ENCODE measurements at regions of chr3 and their contacts with region 1.

Region 1: DNA sequence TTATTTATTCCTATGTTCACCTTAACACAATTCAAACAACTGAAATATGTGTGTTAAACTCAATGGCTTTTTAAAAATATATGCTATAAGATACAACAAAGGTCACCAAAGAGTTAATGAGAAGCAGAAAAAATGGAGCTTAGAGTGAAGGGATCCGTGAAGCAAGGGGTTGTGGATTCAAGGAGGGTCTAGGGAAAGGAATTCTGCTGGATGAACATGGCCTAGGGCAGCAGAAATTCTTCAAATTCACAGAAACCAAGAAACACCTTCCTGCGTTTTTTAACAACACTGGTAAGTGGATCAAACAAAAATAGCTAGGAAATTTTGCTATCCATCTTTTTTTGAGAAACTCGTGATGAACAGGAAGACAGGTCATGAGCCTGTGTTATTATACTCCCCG is 59.3 kb upstream of the PLSCR5 start:
- DNase-seq: no peak
- H3K4me3 Mint-ChIP-seq: no peak overlapping the region
- H3K27ac Mint-ChIP-seq: no peak overlapping the region
- H3K4me1 Mint-ChIP-seq: no peaks in the 10 kb centered on the region
- H3K27me3 Mint-ChIP-seq: no peaks in the 10 kb centered on the region
- CTCF ChIP-seq: no peak

Region 2: GRCh38 chr3:146682171-146682570 is 17.8 kb after region 1 on chr3:
- CTCF ChIA-PET with region 1: interaction called, 3 read pairs
- intact Hi-C with region 1: loop called (anchors 1 kb)
- DNase-seq: no peak
- H3K4me3 Mint-ChIP-seq: no peak overlapping the region
- H3K27ac Mint-ChIP-seq: no peak overlapping the region
- H3K4me1 Mint-ChIP-seq: no peaks in the 10 kb centered on the region
- H3K27me3 Mint-ChIP-seq: no peaks in the 10 kb centered on the region
- CTCF ChIP-seq: no peak

Region 3: GRCh38 chr3:146701246-146701645 is 36.8 kb after region 1 on chr3:
- CTCF ChIA-PET with region 1: no interaction called
- intact Hi-C with region 1: no loop called
- DNase-seq: no peak
- H3K4me3 Mint-ChIP-seq: no peak overlapping the region
- H3K27ac Mint-ChIP-seq: no peak overlapping the region
- H3K4me1 Mint-ChIP-seq: no peaks in the 10 kb centered on the region
- H3K27me3 Mint-ChIP-seq: no peaks in the 10 kb centered on the region
- CTCF ChIP-seq: no peak

Region 4: DNA sequence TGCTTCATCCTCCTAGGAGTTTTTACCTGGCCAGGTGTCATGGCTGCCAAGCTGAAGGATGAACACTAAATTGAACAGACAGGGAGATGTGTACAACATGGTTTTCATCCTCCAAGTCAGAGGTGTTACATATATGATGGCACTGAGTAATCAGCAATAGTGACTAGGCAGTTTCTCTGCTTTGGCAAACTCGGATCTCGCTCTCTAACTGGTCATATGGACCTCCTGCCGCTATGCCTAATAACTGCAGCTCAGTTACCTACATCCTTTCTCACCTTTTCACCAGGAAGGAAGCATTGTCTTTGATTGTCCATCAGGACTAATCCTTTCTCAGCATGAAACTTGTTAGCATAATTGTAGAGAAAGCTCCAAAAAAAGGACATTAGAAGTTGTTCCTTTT is 116.7 kb after region 1 on chr3:
- CTCF ChIA-PET with region 1: no interaction called
- intact Hi-C with region 1: no loop called
- DNase-seq: no peak
- H3K4me3 Mint-ChIP-seq: no peak overlapping the region
- H3K27ac Mint-ChIP-seq: no peak overlapping the region
- H3K4me1 Mint-ChIP-seq: no peaks in the 10 kb centered on the region
- H3K27me3 Mint-ChIP-seq: no peaks in the 10 kb centered on the region
- CTCF ChIP-seq: no peak

Measured in Calu3 (cell line).